Naive thymus-derived CD4-positive, alpha-beta T cell (primary cell): ENCODE measurements at regions of chrX and their contacts with region 1.

Region 1: GRCh38 chrX:7925867-7926472 is 1.2 kb downstream of the PNPLA4 start:
- DNase-seq: peak; percentile 5 to 79 (median 62)
- ATAC-seq: peak; percentile 67
- H3K4me3 ChIP-seq: no peak overlapping the region
- H3K4me3 Mint-ChIP-seq: peak overlapping the region; percentile 38 to 99 (median 90)
- H3K27ac ChIP-seq: no peak overlapping the region
- H3K27ac Mint-ChIP-seq: peak overlapping the region; percentile 33 to 99 (median 54)
- H3K4me1 ChIP-seq: peaks cover 6 to 11% of the 10 kb centered on the region in 2 donors
- H3K4me1 Mint-ChIP-seq: peaks cover 0 to 37% (median 20%) of the 10 kb centered on the region in 7 donors
- H3K27me3 ChIP-seq: no peaks in the 10 kb centered on the region
- H3K27me3 Mint-ChIP-seq: no peaks in the 10 kb centered on the region

Region 2: DNA sequence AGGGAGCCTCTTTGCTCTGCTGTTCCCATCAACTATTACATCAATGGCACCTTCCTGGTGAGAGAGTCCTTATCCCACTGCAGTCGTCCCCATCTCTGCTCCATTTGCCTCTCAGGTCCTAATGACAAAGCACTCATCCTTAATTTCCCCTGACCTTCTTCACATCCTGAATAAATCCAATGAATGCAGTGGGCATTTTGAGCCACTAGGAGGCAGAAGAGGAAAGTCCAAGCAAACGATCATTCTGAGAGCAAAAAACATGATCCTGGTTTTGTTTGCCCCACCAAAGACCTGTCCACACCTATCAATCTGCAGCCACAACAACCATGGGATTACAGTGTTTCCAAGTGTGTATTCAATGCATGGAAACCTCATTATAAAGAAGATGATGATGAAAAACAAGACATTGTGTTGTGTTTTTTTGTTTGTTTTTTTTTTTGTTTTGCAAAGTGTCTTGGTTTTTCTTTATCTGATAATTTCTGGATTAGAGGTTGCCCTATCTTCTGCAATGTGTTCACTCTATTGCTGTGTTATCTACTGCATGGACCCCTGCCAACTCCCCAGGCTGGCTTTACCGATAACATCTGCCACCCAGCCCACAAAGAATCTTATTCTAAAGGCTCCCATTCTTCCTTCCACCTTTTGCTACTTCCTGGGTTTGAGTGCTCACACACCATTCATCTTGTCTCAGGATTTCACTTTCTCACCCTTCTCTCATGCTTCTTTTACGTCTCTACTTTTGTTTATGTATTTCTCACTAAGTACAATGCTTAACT is 1904.5 kb before region 1 on chrX:
- CTCF ChIA-PET with region 1: no interaction called
- POLR2A ChIA-PET with region 1: no interaction called
- intact Hi-C with region 1: loop called in 1 of 2 experiments (anchors 2 kb)
- DNase-seq: peak in 5 of 9 donors; percentile 8 to 46 (median 21)
- ATAC-seq: no peak
- H3K4me3 ChIP-seq: no peak overlapping the region
- H3K4me3 Mint-ChIP-seq: no peak overlapping the region
- H3K27ac ChIP-seq: no peak overlapping the region
- H3K27ac Mint-ChIP-seq: peak overlapping the region in 1 of 9 donors; percentile 32
- H3K4me1 ChIP-seq: no peaks in the 10 kb centered on the region
- H3K4me1 Mint-ChIP-seq: peaks cover 0 to 6% (median 4%) of the 10 kb centered on the region in 7 donors
- H3K27me3 ChIP-seq: no peaks in the 10 kb centered on the region
- H3K27me3 Mint-ChIP-seq: peaks cover 0 to 11% (median 0%) of the 10 kb centered on the region in 5 donors

Region 3: GRCh38 chrX:7132335-7133049 is 793.5 kb before region 1 on chrX:
- CTCF ChIA-PET with region 1: no interaction called
- POLR2A ChIA-PET with region 1: no interaction called
- intact Hi-C with region 1: loop called in 1 of 2 experiments (anchors 5 kb)
- DNase-seq: peak in 5 of 9 donors; percentile 1 to 40 (median 18)
- ATAC-seq: peak; percentile 60
- H3K4me3 ChIP-seq: no peak overlapping the region
- H3K4me3 Mint-ChIP-seq: peak overlapping the region in 3 of 10 donors; percentile 9 to 25 (median 11)
- H3K27ac ChIP-seq: no peak overlapping the region
- H3K27ac Mint-ChIP-seq: peak overlapping the region in 8 of 9 donors; percentile 12 to 87 (median 72)
- H3K4me1 ChIP-seq: no peaks in the 10 kb centered on the region
- H3K4me1 Mint-ChIP-seq: peaks cover 12 to 53% (median 39%) of the 10 kb centered on the region in 7 donors
- H3K27me3 ChIP-seq: no peaks in the 10 kb centered on the region
- H3K27me3 Mint-ChIP-seq: no peaks in the 10 kb centered on the region